ENCODE measurements at regions of chr6 and their contacts with region 1.

Region 1: DNA sequence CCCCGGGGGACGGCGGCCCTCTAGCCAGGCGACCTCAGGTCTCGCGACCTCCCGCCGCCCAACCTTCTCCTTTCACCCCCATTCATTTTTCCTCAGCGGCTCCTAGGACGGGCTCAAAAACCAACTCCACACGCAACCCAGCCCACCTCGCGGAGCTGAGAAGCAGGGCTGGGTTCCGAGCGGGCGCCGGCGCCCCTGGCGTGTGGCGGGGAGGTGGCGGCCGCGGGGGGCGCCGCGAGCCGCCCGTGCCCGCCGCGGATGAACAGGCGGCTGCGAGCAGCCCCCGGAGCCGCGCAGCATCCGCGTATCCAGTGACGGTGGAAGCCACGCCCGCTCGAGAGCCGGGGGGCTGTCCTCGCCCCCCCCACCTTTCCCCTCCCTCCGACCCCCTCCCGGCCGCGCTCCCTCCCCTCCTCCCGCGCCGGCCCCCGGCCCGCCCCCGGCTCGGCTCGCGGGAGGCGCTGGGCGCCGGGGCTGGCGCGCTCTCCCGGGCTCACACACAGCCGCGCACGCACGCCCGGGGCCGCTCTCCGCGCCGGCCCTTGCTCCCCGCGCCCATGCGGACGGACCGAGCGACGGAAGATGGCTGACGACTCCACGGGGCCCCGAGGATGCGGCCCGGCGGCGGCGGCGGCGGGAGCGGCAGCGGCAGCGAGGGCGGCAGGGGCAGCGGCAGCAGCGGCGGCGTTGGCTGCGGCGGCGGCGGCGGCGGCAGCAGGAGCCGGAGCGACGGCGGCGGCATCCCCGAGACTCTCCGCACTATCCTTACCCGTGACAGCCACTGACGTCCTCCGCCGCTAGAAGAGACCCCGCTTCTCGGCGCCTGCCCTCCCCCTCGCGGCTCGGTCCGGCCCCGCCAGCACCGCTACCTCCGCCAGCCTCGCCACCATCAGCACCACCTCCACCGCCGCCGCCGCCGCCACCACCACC is at the start of gene SOBP:
- DNase-seq: peak in 8 of 9 donors; percentile 28 to 52 (median 35)
- ATAC-seq: peak; percentile 58
- H3K4me3 ChIP-seq: peak within 1 kb of the TSS; percentile 59
- H3K4me3 Mint-ChIP-seq: peak within 1 kb of the TSS; percentile 85 to 95 (median 90)
- H3K27ac ChIP-seq: no peak within 1 kb of the TSS
- H3K27ac Mint-ChIP-seq: peak within 1 kb of the TSS in 4 of 9 donors; percentile 7 to 39 (median 34)
- H3K4me1 ChIP-seq: peaks cover 9 to 15% of the 10 kb centered on the region in 2 donors
- H3K4me1 Mint-ChIP-seq: peaks cover 11 to 22% (median 20%) of the 10 kb centered on the region in 7 donors
- H3K27me3 ChIP-seq: peaks cover 18 to 23% of the 10 kb centered on the region in 2 donors
- H3K27me3 Mint-ChIP-seq: peaks cover 32 to 52% (median 43%) of the 10 kb centered on the region in 5 donors
- total RNA-seq, gene SOBP: 0.08 to 0.15 TPM in 2 of 5 experiments, not detected in the others

Region 2: DNA sequence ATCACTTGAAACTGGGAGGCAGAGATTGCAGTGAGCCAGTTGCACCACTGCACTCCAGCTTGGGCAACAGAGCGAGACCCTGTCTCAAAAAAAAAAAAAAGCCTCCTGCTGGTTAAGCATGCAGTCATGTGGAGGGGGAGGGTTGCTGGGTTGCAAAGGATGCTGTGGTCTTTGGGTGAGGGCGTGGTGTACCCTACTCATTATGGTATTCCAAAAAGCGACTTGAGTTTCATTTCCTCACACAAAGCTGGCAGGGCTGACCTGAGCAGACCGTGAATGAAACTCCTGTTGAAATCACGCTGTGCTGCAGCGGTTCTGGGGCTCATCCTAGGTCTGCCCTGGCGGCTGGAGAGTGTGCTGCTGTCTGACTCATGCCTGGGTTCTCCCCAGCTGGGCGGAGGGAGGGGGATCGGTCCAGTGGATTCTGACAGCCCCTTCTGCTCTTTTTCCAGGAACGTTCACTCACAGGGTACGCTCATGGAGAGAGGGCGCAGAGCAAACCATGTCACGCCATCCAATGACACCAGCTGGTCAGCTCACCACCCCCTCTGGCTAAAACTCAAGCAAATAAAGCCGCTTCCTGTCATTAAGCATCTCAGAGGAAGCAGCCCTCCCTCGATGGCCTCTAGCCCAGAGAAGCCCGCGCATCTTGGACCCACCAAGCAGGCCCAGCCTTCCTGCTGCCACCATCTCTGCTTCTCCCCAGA is 168.0 kb after region 1 on chr6:
- CTCF ChIA-PET with region 1: no interaction called
- POLR2A ChIA-PET with region 1: no interaction called
- intact Hi-C with region 1: loop called (anchors 5 to 10 kb)
- DNase-seq: peak in 8 of 9 donors; percentile 24 to 56 (median 42)
- ATAC-seq: peak; percentile 90
- H3K4me3 ChIP-seq: peak overlapping the region; percentile 34
- H3K4me3 Mint-ChIP-seq: peak overlapping the region; percentile 64 to 86 (median 78)
- H3K27ac ChIP-seq: peak overlapping the region; percentile 37
- H3K27ac Mint-ChIP-seq: peak overlapping the region in 8 of 9 donors; percentile 36 to 88 (median 64)
- H3K4me1 ChIP-seq: peaks cover 21 to 26% of the 10 kb centered on the region in 2 donors
- H3K4me1 Mint-ChIP-seq: peaks cover 25 to 44% (median 33%) of the 10 kb centered on the region in 7 donors
- H3K27me3 ChIP-seq: no peaks in the 10 kb centered on the region
- H3K27me3 Mint-ChIP-seq: peaks cover 0 to 13% (median 5%) of the 10 kb centered on the region in 5 donors

Measured in naive thymus-derived CD4-positive, alpha-beta T cell (primary cell).